Endothelial cell of umbilical vein (primary cell): ENCODE measurements at regions of chr4 and their contacts with region 1.

Region 1: GRCh38 chr4:151015459-151016347 is 619 bp upstream of the LRBA start:
- DNase-seq: peak; percentile 78
- H3K4me3 ChIP-seq: peak overlapping the region; percentile 44 to 95 (median 84)
- H3K27ac ChIP-seq: peak overlapping the region; percentile 82
- H3K4me1 ChIP-seq: peaks cover 19% of the 10 kb centered on the region
- H3K27me3 ChIP-seq: no peaks in the 10 kb centered on the region
- CTCF ChIP-seq: no peak
- POLR2A ChIP-seq: peak; percentile 89

Region 2: GRCh38 chr4:150960818-150961217 is 54.9 kb before region 1 on chr4:
- CTCF ChIA-PET with region 1: interaction called, 3 read pairs
- POLR2A ChIA-PET with region 1: no interaction called
- dilution Hi-C with region 1: no loop called
- intact Hi-C with region 1: loop called (anchors 5 kb)
- DNase-seq: peak; percentile 46
- H3K4me3 ChIP-seq: no peak overlapping the region
- H3K27ac ChIP-seq: no peak overlapping the region
- H3K4me1 ChIP-seq: peaks cover 22% of the 10 kb centered on the region
- H3K27me3 ChIP-seq: no peaks in the 10 kb centered on the region
- CTCF ChIP-seq: peak; percentile 52 to 57
- POLR2A ChIP-seq: no peak

Region 3: GRCh38 chr4:151031831-151032605 is 16.3 kb after region 1 on chr4:
- CTCF ChIA-PET with region 1: interaction called, 4 read pairs
- POLR2A ChIA-PET with region 1: interaction called, 3 read pairs
- dilution Hi-C with region 1: no loop called
- intact Hi-C with region 1: loop called (anchors 1 kb)
- DNase-seq: peak; percentile 97
- H3K4me3 ChIP-seq: peak overlapping the region in 1 of 3 experiments; percentile 23
- H3K27ac ChIP-seq: peak overlapping the region; percentile 96
- H3K4me1 ChIP-seq: peaks cover 6% of the 10 kb centered on the region
- H3K27me3 ChIP-seq: no peaks in the 10 kb centered on the region
- CTCF ChIP-seq: no peak
- POLR2A ChIP-seq: peak; percentile 75

Region 4: GRCh38 chr4:151099229-151099975 is 83.7 kb after region 1 on chr4 and contains the start of gene RPS3A:
- CTCF ChIA-PET with region 1: no interaction called
- POLR2A ChIA-PET with region 1: interaction called, 3 read pairs
- dilution Hi-C with region 1: no loop called
- intact Hi-C with region 1: loop called (anchors 1 kb)
- DNase-seq: peak; percentile 99
- H3K4me3 ChIP-seq: peak within 1 kb of the TSS; percentile 46 to 89 (median 78)
- H3K27ac ChIP-seq: peak within 1 kb of the TSS; percentile 69
- H3K4me1 ChIP-seq: peaks cover 17% of the 10 kb centered on the region
- H3K27me3 ChIP-seq: no peaks in the 10 kb centered on the region
- CTCF ChIP-seq: peak; percentile 94 to 96
- POLR2A ChIP-seq: peak; percentile 98
- total RNA-seq, gene RPS3A: 1,468 and 1,494 TPM in 2 replicates

Region 5: DNA sequence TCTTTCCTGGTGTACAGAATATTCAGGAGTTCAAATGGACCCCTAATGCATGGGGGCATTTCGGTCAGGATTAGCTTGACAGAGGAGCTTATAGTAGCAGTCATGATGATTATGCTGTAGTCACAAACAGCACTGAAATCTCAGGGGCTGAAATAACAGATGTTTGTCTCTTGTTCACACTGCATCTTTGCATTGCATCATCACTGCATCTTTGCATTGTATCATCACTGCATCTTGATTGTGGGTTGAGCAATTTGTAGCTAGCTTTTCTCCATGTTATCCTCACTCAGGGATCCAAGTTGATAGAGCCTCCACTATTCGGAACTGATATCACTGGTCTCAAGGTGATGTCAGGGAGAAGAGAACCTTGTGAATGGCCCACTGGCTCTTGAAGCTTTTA is 584.2 kb after region 1 on chr4:
- CTCF ChIA-PET with region 1: no interaction called
- POLR2A ChIA-PET with region 1: no interaction called
- dilution Hi-C with region 1: no loop called
- intact Hi-C with region 1: no loop called
- DNase-seq: no peak
- H3K4me3 ChIP-seq: no peak overlapping the region
- H3K27ac ChIP-seq: no peak overlapping the region
- H3K4me1 ChIP-seq: no peaks in the 10 kb centered on the region
- H3K27me3 ChIP-seq: peaks cover 0 to 5% of the 10 kb centered on the region in 2 experiments
- CTCF ChIP-seq: no peak
- POLR2A ChIP-seq: no peak

Region 6: GRCh38 chr4:152679414-152680281 is 1663.9 kb after region 1 on chr4 and contains the start of gene TMEM154:
- CTCF ChIA-PET with region 1: no interaction called
- POLR2A ChIA-PET with region 1: no interaction called
- dilution Hi-C with region 1: no loop called
- intact Hi-C with region 1: loop called (anchors 5 kb)
- DNase-seq: peak; percentile 75
- H3K4me3 ChIP-seq: peak within 1 kb of the TSS; percentile 49 to 93 (median 83)
- H3K27ac ChIP-seq: peak within 1 kb of the TSS; percentile 85
- H3K4me1 ChIP-seq: peaks cover 44% of the 10 kb centered on the region
- H3K27me3 ChIP-seq: no peaks in the 10 kb centered on the region
- CTCF ChIP-seq: no peak
- POLR2A ChIP-seq: peak; percentile 84
- total RNA-seq, gene TMEM154: 43.6 and 50.0 TPM in 2 replicates